ENCODE measurements at regions of chr1 and their contacts with region 1.

Region 1: DNA sequence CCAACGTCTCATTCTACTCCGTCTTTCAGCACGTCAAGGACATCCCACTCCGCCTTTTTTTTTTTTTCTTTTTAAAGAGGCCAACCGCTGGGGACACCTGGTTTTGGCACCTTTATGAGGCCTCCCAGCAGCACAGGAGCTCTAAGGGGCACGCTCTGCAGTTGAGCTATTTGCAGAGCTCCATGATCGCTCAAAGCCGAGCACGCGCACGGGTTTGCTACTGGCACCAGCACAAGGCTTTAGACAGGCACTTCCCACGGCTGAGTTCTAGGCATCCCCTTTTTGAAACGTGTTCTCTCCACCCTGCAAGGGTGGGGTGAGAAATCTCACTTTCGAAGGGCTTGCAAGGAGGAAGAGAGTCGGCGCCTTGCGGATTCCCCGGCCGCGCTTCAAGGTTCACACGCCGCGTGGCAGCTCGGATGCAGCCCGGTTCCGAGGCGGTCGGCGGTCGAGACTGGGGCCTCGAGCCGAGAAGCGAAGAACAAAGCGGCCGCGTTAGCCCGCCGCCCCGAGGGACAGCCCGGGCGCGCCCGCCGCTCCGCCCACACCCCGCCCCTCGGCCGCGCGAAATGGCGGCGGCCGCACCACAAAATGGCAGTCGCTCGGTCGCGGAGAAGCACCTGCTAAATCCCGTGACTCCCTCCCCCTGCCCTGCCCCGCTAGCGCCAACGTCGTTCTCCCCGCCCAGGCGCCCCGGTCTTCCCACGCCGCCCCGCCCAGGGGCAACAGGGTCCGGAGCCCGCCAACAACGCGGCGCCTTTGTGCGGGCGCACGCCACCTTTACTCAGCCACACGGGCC is 12.9 kb upstream of the SPEN start:
- DNase-seq: peak; percentile 77 to 93 (median 82)
- ATAC-seq: peak; percentile 69 to 73 (median 70)
- H3K4me3 ChIP-seq: peak overlapping the region; percentile 69 to 79
- H3K4me3 Mint-ChIP-seq: peak overlapping the region; percentile 90 to 95 (median 92)
- H3K27ac ChIP-seq: peak overlapping the region; percentile 93
- H3K27ac Mint-ChIP-seq: peak overlapping the region; percentile 97
- H3K4me1 ChIP-seq: peaks cover 3 to 44% of the 10 kb centered on the region in 2 experiments
- H3K4me1 Mint-ChIP-seq: peaks cover 20 to 39% (median 31%) of the 10 kb centered on the region in 3 donors
- H3K27me3 ChIP-seq: no peaks in the 10 kb centered on the region
- H3K27me3 Mint-ChIP-seq: no peaks in the 10 kb centered on the region

Region 2: DNA sequence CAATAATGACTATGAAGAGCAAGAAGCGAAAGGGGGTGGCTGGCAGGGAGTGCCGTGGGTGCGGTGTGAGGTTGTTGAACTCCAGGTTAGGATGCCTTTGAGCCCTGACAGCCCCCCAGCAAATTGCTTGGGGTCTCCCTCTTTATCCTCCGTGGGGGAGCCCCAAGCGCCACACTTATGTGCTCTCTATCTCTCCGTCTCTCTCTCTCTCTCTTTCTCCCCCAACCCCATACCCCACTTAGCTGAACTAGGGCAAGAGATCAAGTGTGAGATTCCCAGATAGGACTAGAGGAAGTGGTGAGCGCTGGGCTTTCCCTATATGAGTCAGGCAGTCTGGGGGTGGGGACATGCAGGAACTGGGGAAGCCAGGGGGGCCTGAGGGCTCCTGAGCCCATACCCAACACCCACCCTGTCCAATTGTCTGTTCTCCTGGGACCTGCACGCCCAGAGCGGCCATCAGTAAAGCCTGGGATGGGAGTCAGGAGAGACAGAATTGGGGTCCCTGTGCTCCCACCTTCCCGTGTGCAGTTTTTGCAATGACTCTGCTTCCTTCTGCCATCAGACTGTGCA is 417.2 kb before region 1 on chr1:
- CTCF ChIA-PET with region 1: no interaction called
- POLR2A ChIA-PET with region 1: interaction called in 1 of 2 experiments, 14 read pairs
- DNase-seq: peak in 33 of 35 experiments; percentile 32 to 85 (median 56)
- ATAC-seq: peak; percentile 74 to 80 (median 77)
- H3K4me3 ChIP-seq: peak overlapping the region in 1 of 2 donors; percentile 12
- H3K4me3 Mint-ChIP-seq: peak overlapping the region; percentile 51 to 71 (median 52)
- H3K27ac ChIP-seq: peak overlapping the region; percentile 89
- H3K27ac Mint-ChIP-seq: peak overlapping the region; percentile 87 to 90
- H3K4me1 ChIP-seq: peaks cover 7 to 82% of the 10 kb centered on the region in 2 experiments
- H3K4me1 Mint-ChIP-seq: peaks cover 47 to 79% (median 62%) of the 10 kb centered on the region in 3 donors
- H3K27me3 ChIP-seq: no peaks in the 10 kb centered on the region
- H3K27me3 Mint-ChIP-seq: no peaks in the 10 kb centered on the region

Region 3: GRCh38 chr1:15820478-15820877 is 14.1 kb before region 1 on chr1:
- CTCF ChIA-PET with region 1: interaction called, 3 to 26 read pairs
- POLR2A ChIA-PET with region 1: interaction called in 1 of 2 experiments, 8 read pairs
- DNase-seq: no peak
- ATAC-seq: no peak
- H3K4me3 ChIP-seq: no peak overlapping the region
- H3K4me3 Mint-ChIP-seq: no peak overlapping the region
- H3K27ac ChIP-seq: no peak overlapping the region
- H3K27ac Mint-ChIP-seq: no peak overlapping the region
- H3K4me1 ChIP-seq: no peaks in the 10 kb centered on the region
- H3K4me1 Mint-ChIP-seq: peaks cover 3 to 6% (median 4%) of the 10 kb centered on the region in 3 donors
- H3K27me3 ChIP-seq: no peaks in the 10 kb centered on the region
- H3K27me3 Mint-ChIP-seq: no peaks in the 10 kb centered on the region

Region 4: GRCh38 chr1:15847100-15847892 is 12.7 kb after region 1 on chr1 and contains the start of gene SPEN:
- CTCF ChIA-PET with region 1: interaction called in 1 of 2 experiments, 35 read pairs
- POLR2A ChIA-PET with region 1: interaction called, 10 to 85 read pairs
- DNase-seq: peak; percentile 93 to 100 (median 98)
- ATAC-seq: peak; percentile 82 to 86 (median 83)
- H3K4me3 ChIP-seq: peak within 1 kb of the TSS; percentile 93 to 95
- H3K4me3 Mint-ChIP-seq: peak within 1 kb of the TSS; percentile 97 to 98 (median 97)
- H3K27ac ChIP-seq: peak within 1 kb of the TSS; percentile 95
- H3K27ac Mint-ChIP-seq: peak within 1 kb of the TSS; percentile 96 to 97
- H3K4me1 ChIP-seq: peaks cover 25 to 33% of the 10 kb centered on the region in 2 experiments
- H3K4me1 Mint-ChIP-seq: peaks cover 49 to 58% (median 53%) of the 10 kb centered on the region in 3 donors
- H3K27me3 ChIP-seq: no peaks in the 10 kb centered on the region
- H3K27me3 Mint-ChIP-seq: no peaks in the 10 kb centered on the region
- total RNA-seq, gene SPEN: 69.9 to 81.1 (median 72.1) TPM

Measured in T-cell (primary cell).